Left ventricle myocardium superior (tissue), 1 donor: ENCODE measurements at regions of chr12 and their contacts with region 1.

Region 1: DNA sequence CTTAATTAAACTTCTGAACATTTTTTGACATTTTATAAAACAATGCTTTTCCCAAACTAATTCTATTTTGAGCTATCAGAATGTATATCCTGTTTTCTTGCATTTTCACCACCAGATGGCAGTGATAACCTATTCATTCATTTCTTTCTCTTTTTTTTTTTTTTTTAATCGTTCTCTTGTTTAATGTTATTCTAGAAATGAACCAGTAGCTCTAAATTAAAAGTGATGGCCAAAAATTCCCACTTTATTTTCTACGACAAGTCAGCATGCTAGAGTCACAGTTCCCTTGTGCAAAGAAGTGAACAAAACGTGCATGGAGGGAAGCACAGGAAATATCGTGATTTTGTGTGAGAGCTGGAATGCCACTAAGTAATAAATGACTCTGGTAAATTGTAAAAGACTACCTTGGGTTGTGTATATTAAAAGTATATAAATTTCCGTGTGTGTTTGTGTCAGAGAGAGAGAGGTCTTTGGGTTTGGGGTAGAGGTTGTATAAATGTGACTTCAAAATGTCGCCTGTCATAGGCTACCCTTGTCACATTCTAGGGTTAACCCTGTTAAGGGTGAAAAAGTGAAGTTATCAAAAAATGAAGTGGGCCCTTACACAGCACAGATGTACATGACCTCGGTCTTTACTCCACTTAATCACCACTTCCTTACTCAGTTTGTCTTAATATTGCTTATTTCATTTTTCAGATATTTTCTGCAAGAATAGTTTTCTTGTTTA is 40.4 kb upstream of the LDHB start:
- DNase-seq: no peak
- ATAC-seq: no peak

Region 2: GRCh38 chr12:21984375-21984774 is 286.3 kb after region 1 on chr12:
- intact Hi-C with region 1: loop called (anchors 5 kb)
- DNase-seq: no peak
- ATAC-seq: no peak

Region 3: GRCh38 chr12:22018860-22019259 is 320.8 kb after region 1 on chr12:
- intact Hi-C with region 1: loop called (anchors 10 kb)
- DNase-seq: no peak
- ATAC-seq: no peak